OCI-LY7 (cell line): ENCODE measurements at regions of chr7 and their contacts with region 1.

Region 1: GRCh38 chr7:30164567-30164966 is 29.8 kb downstream of the MTURN start:
- DNase-seq: peak; percentile 75
- H3K4me3 ChIP-seq: no peak overlapping the region
- H3K27ac ChIP-seq: no peak overlapping the region
- H3K4me1 ChIP-seq: peaks cover 37% of the 10 kb centered on the region
- CTCF ChIP-seq: peak; percentile 92

Region 2: GRCh38 chr7:30154111-30154587 is 10.4 kb before region 1 on chr7:
- CTCF ChIA-PET with region 1: no interaction called
- POLR2A ChIA-PET with region 1: no interaction called
- intact Hi-C with region 1: no loop called
- DNase-seq: no peak
- H3K4me3 ChIP-seq: no peak overlapping the region
- H3K27ac ChIP-seq: no peak overlapping the region
- H3K4me1 ChIP-seq: peaks cover 10% of the 10 kb centered on the region
- CTCF ChIP-seq: no peak

Region 3: GRCh38 chr7:30178748-30179436 is 14.3 kb after region 1 on chr7:
- CTCF ChIA-PET with region 1: interaction called, 6 read pairs
- POLR2A ChIA-PET with region 1: interaction called, 10 read pairs
- intact Hi-C with region 1: no loop called
- DNase-seq: peak; percentile 69
- H3K4me3 ChIP-seq: peak overlapping the region; percentile 43
- H3K27ac ChIP-seq: peak overlapping the region; percentile 8
- H3K4me1 ChIP-seq: peaks cover 28% of the 10 kb centered on the region
- CTCF ChIP-seq: no peak

Region 4: GRCh38 chr7:30348083-30348560 is 183.6 kb after region 1 on chr7:
- CTCF ChIA-PET with region 1: no interaction called
- POLR2A ChIA-PET with region 1: no interaction called
- intact Hi-C with region 1: loop called (anchors 2 kb)
- DNase-seq: peak; percentile 58
- H3K4me3 ChIP-seq: peak overlapping the region; percentile 31
- H3K27ac ChIP-seq: peak overlapping the region; percentile 31
- H3K4me1 ChIP-seq: peaks cover 66% of the 10 kb centered on the region
- CTCF ChIP-seq: no peak

Region 5: DNA sequence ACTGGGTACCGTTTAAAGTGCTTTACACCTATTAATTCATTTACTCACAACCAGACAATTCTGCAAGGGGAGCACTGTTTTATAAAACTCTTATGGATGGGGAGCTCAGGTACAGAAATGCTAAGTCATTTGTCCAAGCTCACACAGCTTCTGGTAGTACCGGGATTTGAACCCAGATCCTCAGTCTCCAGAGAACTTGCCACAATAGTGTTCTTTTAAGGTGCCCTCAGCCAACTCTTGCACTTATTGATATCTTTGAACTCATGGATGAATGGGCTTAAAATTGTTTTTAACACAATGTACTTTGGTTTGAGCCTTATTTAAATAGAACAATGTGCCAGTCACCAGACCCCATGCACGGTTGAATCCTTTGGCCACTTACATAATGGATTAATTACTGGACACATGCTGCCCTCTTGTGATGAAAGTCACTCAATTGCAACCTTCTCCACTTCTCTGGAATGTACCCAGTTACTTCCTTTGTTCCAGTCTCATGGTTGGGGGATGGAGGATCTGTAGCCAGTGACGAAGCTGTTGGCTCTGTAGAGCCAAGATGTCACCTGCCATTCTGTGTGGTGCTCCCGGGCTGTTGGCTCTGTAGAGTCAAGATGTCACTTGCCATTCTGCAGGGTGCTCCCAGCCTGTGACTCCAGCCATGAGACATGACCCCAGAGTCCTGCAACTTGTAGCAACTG is 248.4 kb after region 1 on chr7:
- CTCF ChIA-PET with region 1: no interaction called
- POLR2A ChIA-PET with region 1: no interaction called
- intact Hi-C with region 1: loop called (anchors 2 kb)
- DNase-seq: peak; percentile 47
- H3K4me3 ChIP-seq: no peak overlapping the region
- H3K27ac ChIP-seq: no peak overlapping the region
- H3K4me1 ChIP-seq: peaks cover 41% of the 10 kb centered on the region
- CTCF ChIP-seq: peak; percentile 67

Region 6: GRCh38 chr7:30445770-30446169 is 281.2 kb after region 1 on chr7:
- CTCF ChIA-PET with region 1: no interaction called
- POLR2A ChIA-PET with region 1: interaction called, 3 read pairs
- intact Hi-C with region 1: loop called (anchors 5 kb)
- DNase-seq: peak; percentile 93
- H3K4me3 ChIP-seq: no peak overlapping the region
- H3K27ac ChIP-seq: no peak overlapping the region
- H3K4me1 ChIP-seq: peaks cover 11% of the 10 kb centered on the region
- CTCF ChIP-seq: peak; percentile 78

Region 7: GRCh38 chr7:30510124-30511075 is 345.8 kb after region 1 on chr7:
- CTCF ChIA-PET with region 1: no interaction called
- POLR2A ChIA-PET with region 1: no interaction called
- intact Hi-C with region 1: loop called (anchors 2 kb)
- DNase-seq: peak; percentile 57
- H3K4me3 ChIP-seq: no peak overlapping the region
- H3K27ac ChIP-seq: no peak overlapping the region
- H3K4me1 ChIP-seq: peaks cover under 1% of the 10 kb centered on the region
- CTCF ChIP-seq: peak; percentile 99